GM10248 (cell line): ENCODE measurements at regions of chrX and their contacts with region 1.

Region 1: GRCh38 chrX:26783512-26784225 is 567.7 kb downstream of the MAGEB5 start:
- DNase-seq: no peak
- CTCF ChIP-seq: peak; percentile 48

Region 2: GRCh38 chrX:25296850-25297249 is 1486.8 kb before region 1 on chrX:
- CTCF ChIA-PET with region 1: no interaction called
- POLR2A ChIA-PET with region 1: no interaction called
- DNase-seq: no peak
- CTCF ChIP-seq: no peak

Region 3: DNA sequence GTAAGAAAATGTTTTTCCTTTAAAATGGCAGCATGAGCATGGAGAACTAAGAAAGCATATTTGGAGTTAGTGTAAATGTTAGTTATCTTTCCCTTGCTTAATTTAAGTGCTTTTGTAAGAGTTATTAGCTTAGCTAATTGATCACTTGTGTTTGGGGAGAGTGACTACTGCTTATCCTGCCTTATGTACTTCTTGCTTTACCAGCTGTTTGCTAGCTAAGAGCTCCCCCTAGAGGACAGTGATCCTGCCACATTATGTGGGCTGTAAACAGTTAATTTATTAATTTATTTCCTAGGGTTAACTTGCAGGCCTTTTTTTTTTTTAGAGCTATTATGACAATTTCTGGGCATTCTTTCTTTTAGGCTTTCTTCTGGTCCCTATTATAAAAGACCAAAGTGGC is 131.9 kb before region 1 on chrX:
- CTCF ChIA-PET with region 1: no interaction called
- POLR2A ChIA-PET with region 1: no interaction called
- DNase-seq: no peak
- CTCF ChIP-seq: peak; percentile 19

Region 4: DNA sequence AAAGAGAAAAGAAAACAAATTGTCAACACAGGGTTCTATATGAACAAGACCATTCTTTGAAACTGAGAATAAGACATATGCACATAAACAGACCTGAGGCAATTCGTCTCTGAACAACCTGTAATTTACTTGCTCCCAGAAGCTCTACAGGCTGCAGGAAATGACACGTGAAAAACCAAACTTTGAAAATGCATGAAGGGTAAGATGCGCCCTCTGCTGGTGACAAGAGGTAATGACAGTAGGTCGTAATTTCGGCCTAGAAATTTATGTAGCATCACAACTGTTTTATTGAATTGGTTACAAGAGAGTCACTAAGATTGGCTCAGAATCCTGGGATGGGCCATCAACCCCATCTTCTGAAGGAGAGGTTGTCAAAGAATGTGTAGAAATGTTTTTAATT is 403.0 kb after region 1 on chrX:
- CTCF ChIA-PET with region 1: interaction called, 10 read pairs
- POLR2A ChIA-PET with region 1: no interaction called
- DNase-seq: peak; percentile 16
- CTCF ChIP-seq: peak; percentile 58